ENCODE measurements at regions of chr1 and their contacts with region 1.

Region 1: GRCh38 chr1:212070720-212071302 is 35.3 kb downstream of the DTL start:
- DNase-seq: peak in 1 of 3 donors; percentile 12
- ATAC-seq: peak; percentile 73
- H3K4me3 ChIP-seq: no peak overlapping the region
- H3K4me1 ChIP-seq: no peaks in the 10 kb centered on the region
- CTCF ChIP-seq: peak; percentile 19

Region 2: DNA sequence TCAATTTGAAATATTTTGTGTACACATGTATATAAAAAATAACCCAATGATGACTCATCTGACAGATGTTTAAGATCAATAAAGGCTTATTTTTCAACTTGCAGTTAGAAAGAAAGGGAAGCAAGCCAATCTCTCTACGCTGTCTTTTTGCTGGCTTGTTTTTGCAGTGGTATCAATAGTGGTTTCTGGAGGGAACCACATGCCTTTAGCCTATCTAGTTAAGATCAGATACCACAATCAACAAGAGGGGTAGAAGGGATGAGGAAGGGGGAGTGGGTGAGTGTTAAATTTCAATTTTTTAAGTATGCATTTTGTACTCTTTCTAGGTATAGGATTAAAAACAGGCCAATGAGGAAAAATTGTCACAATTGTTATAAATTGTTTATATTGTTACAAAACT is 1213.1 kb before region 1 on chr1:
- intact Hi-C with region 1: no loop called
- DNase-seq: no peak
- ATAC-seq: no peak
- H3K4me3 ChIP-seq: no peak overlapping the region
- H3K4me1 ChIP-seq: no peaks in the 10 kb centered on the region
- CTCF ChIP-seq: no peak

Region 3: DNA sequence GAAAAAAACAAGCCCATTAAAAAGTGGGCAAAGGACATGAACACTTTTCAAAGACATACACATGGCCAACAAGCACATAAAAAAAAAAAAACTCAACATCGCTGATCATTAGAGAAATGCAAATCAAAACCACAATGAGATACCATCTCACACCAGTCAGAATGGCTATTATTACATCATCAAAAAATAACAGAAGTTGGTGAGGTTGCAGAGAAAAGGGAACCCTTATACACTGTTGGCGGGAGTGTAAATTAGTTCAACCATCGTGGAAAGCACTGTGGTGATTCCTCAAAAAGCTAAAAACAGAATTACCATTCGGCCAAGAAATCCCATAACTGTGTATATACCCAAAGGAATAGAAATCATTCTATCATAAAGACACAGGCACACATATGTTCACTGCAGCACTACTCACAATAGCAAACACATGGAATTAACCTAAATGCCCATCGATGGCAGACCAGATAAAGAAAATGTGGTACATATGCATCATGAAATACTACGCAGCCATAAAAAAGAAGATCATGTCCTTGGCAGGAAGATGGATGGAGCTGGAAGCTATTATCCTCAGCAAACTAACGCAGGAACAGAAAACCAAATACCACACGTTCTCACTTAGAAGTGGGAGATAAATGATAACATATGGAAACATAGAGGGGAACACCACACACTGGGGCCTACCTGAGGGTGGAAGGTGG is 105.6 kb before region 1 on chr1:
- intact Hi-C with region 1: no loop called
- DNase-seq: no peak
- ATAC-seq: no peak
- H3K4me3 ChIP-seq: no peak overlapping the region
- H3K4me1 ChIP-seq: no peaks in the 10 kb centered on the region
- CTCF ChIP-seq: no peak

Region 4: GRCh38 chr1:212132025-212132424 is 61.2 kb after region 1 on chr1:
- intact Hi-C with region 1: no loop called
- DNase-seq: no peak
- ATAC-seq: no peak
- H3K4me3 ChIP-seq: no peak overlapping the region
- H3K4me1 ChIP-seq: no peaks in the 10 kb centered on the region
- CTCF ChIP-seq: no peak

Region 5: GRCh38 chr1:212291505-212292134 is 220.8 kb after region 1 on chr1:
- intact Hi-C with region 1: loop called in 1 of 2 experiments (anchors 2 kb)
- DNase-seq: peak in 1 of 3 donors; percentile 14
- ATAC-seq: peak; percentile 67
- H3K4me3 ChIP-seq: no peak overlapping the region
- H3K4me1 ChIP-seq: peaks cover 49% of the 10 kb centered on the region
- CTCF ChIP-seq: peak; percentile 19

Region 6: DNA sequence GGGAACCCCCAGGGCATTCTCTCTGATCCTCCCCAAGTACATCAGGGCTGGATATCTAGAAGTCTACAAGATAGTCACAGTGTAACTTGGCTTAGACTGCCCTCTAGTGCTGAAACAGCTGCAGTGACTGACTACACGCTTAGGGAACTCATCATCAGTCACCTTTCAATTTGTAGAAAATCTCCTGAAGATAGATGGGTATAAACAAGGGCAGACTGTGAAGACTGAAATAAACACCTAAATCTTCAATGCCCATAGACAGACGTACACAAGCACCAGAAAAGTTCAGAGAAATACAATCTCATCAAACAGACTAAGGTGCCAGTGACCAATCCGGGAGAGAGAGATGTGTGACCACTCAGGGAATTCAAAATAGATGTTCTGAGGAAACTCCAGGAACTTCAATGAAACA is 297.3 kb after region 1 on chr1:
- intact Hi-C with region 1: loop called (anchors 5 to 10 kb)
- DNase-seq: peak in 1 of 3 donors; percentile 75
- ATAC-seq: peak; percentile 94
- H3K4me3 ChIP-seq: no peak overlapping the region
- H3K4me1 ChIP-seq: no peaks in the 10 kb centered on the region
- CTCF ChIP-seq: peak; percentile 63